SK-N-SH (cell line): ENCODE measurements at regions of chr4 and their contacts with region 1.

Region 1: GRCh38 chr4:16001484-16001858 is 38.5 kb upstream of the FGFBP2 start:
- DNase-seq: peak; percentile 76
- H3K4me3 ChIP-seq: no peak overlapping the region; a peak in 1 of 4 replicates
- H3K27ac ChIP-seq: no peak overlapping the region
- H3K4me1 ChIP-seq: peaks cover 0 to 12% of the 10 kb centered on the region in 2 experiments; a peak in 1 of 4 replicates
- H3K27me3 ChIP-seq: 0 out of 2 replicates have a peak, but pooled peaks cover 6% of the 10 kb centered on the region
- CTCF ChIP-seq: peak; percentile 88
- EP300 ChIP-seq: no peak; a peak in 1 of 4 replicates
- RAD21 ChIP-seq: peak; percentile 94

Region 2: GRCh38 chr4:15479089-15479912 is 522.2 kb before region 1 on chr4:
- CTCF ChIA-PET with region 1: interaction called, 10 read pairs
- POLR2A ChIA-PET with region 1: no interaction called
- DNase-seq: peak; percentile 74
- H3K4me3 ChIP-seq: peak overlapping the region; percentile 49 to 55
- H3K27ac ChIP-seq: peak overlapping the region; percentile 58 to 93
- H3K4me1 ChIP-seq: peaks cover 10% of the 10 kb centered on the region in 2 experiments; a peak in 3 of 4 replicates
- H3K27me3 ChIP-seq: no peaks in the 10 kb centered on the region
- CTCF ChIP-seq: peak; percentile 79
- EP300 ChIP-seq: no peak
- RAD21 ChIP-seq: peak; percentile 94

Region 3: GRCh38 chr4:15963001-15963451 is 38.4 kb before region 1 on chr4 and contains the start of gene FGFBP2:
- CTCF ChIA-PET with region 1: interaction called, 60 read pairs
- POLR2A ChIA-PET with region 1: no interaction called
- DNase-seq: peak; percentile 75
- H3K4me3 ChIP-seq: no peak within 1 kb of the TSS; a peak in 1 of 4 replicates
- H3K27ac ChIP-seq: no peak within 1 kb of the TSS
- H3K4me1 ChIP-seq: peaks cover 0 to 9% of the 10 kb centered on the region in 2 experiments; a peak in 1 of 4 replicates
- H3K27me3 ChIP-seq: no peaks in the 10 kb centered on the region
- CTCF ChIP-seq: peak; percentile 62
- EP300 ChIP-seq: no peak
- RAD21 ChIP-seq: peak; percentile 79
- polyA plus RNA-seq, gene FGFBP2: 0.62 and 1.7 TPM in 2 replicates

Region 4: GRCh38 chr4:15982842-15983524 is 18.5 kb before region 1 on chr4:
- CTCF ChIA-PET with region 1: interaction called, 37 read pairs
- POLR2A ChIA-PET with region 1: no interaction called
- DNase-seq: no peak
- H3K4me3 ChIP-seq: no peak overlapping the region
- H3K27ac ChIP-seq: no peak overlapping the region
- H3K4me1 ChIP-seq: peaks cover 0 to 3% of the 10 kb centered on the region in 2 experiments; a peak in 1 of 4 replicates
- H3K27me3 ChIP-seq: peaks cover 2% of the 10 kb centered on the region; the same call in 1 of the 2 replicates
- CTCF ChIP-seq: no peak
- EP300 ChIP-seq: no peak
- RAD21 ChIP-seq: no peak

Region 5: GRCh38 chr4:15990570-15991285 is 10.7 kb before region 1 on chr4:
- CTCF ChIA-PET with region 1: interaction called, 37 read pairs
- POLR2A ChIA-PET with region 1: no interaction called
- DNase-seq: no peak
- H3K4me3 ChIP-seq: no peak overlapping the region
- H3K27ac ChIP-seq: no peak overlapping the region
- H3K4me1 ChIP-seq: peaks cover 0 to 3% of the 10 kb centered on the region in 2 experiments; a peak in 1 of 4 replicates
- H3K27me3 ChIP-seq: no peaks in the 10 kb centered on the region; the same call in 1 of the 2 replicates
- CTCF ChIP-seq: no peak
- EP300 ChIP-seq: no peak
- RAD21 ChIP-seq: no peak

Region 6: DNA sequence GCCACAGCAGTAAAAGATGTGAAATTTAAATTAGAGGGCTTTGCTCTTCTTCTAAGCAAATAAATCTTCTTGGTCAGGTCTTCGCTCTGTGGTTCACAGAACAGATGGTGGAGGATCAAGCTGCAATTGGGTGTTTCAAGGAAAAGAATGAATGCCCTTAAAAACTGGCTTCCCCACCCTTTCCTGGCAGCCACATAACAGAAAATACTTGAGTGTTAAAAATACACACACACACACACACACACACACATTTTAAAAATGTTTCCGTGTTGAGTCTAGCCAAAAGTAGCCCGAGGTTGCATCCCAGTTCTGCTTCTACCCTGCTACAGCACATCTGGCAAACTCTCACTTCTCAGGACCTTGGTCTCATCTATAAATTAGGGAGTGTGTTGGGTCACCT is 18.2 kb after region 1 on chr4:
- CTCF ChIA-PET with region 1: interaction called, 11 read pairs
- POLR2A ChIA-PET with region 1: no interaction called
- DNase-seq: no peak
- H3K4me3 ChIP-seq: no peak overlapping the region
- H3K27ac ChIP-seq: no peak overlapping the region
- H3K4me1 ChIP-seq: no peaks in the 10 kb centered on the region
- H3K27me3 ChIP-seq: no peaks in the 10 kb centered on the region; the same call in 1 of the 2 replicates
- CTCF ChIP-seq: no peak
- EP300 ChIP-seq: no peak
- RAD21 ChIP-seq: no peak

Region 7: GRCh38 chr4:16034010-16034829 is 32.7 kb after region 1 on chr4:
- CTCF ChIA-PET with region 1: no interaction called
- POLR2A ChIA-PET with region 1: no interaction called
- DNase-seq: no peak
- H3K4me3 ChIP-seq: no peak overlapping the region
- H3K27ac ChIP-seq: no peak overlapping the region
- H3K4me1 ChIP-seq: peaks cover 0 to 15% of the 10 kb centered on the region in 2 experiments; a peak in 1 of 4 replicates
- H3K27me3 ChIP-seq: no peaks in the 10 kb centered on the region
- CTCF ChIP-seq: no peak
- EP300 ChIP-seq: no peak
- RAD21 ChIP-seq: no peak